GM10248 (cell line): ENCODE measurements at regions of chr10 and their contacts with region 1.

Region 1: GRCh38 chr10:103069453-103070331 is 123.4 kb downstream of the NT5C2 start:
- DNase-seq: peak; percentile 65
- CTCF ChIP-seq: peak; percentile 70

Region 2: GRCh38 chr10:103013416-103013815 is 56.3 kb before region 1 on chr10:
- CTCF ChIA-PET with region 1: no interaction called
- POLR2A ChIA-PET with region 1: no interaction called
- DNase-seq: no peak
- CTCF ChIP-seq: no peak

Region 3: GRCh38 chr10:103100620-103101019 is 30.9 kb after region 1 on chr10:
- CTCF ChIA-PET with region 1: no interaction called
- POLR2A ChIA-PET with region 1: interaction called, 14 read pairs
- DNase-seq: no peak
- CTCF ChIP-seq: no peak

Region 4: DNA sequence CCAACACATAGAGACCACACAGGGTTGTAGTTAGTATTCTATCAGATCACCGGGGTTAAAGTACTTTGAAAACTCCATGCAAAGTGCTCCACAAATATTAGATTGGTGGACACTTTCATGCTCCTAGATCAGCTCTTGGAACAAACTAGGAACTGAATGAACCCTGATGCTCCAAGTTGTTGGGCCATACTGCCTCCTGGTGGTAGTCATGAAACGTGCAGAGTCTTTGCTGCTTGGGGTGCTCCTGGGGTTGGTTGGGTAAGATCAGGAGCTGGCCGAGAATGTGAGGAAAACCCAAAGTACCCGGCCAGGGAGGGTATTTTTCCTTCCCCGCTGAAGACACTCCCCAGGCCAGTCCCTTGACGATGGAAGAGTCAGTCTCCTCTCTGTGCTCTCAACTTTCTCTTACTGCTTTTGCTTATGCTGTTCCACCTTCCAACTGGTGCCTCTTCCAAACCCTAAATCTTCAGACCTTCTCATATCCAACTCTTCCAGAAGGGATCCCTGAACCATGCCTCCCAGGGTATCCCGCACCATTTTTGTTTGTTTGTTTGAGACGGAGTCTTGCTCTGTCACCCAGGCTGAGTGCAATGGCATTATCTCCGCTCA is 175.1 kb after region 1 on chr10:
- CTCF ChIA-PET with region 1: interaction called, 22 read pairs
- POLR2A ChIA-PET with region 1: no interaction called
- DNase-seq: peak; percentile 83
- CTCF ChIP-seq: peak; percentile 94